MCF 10A (cell line): ENCODE measurements at regions of chr10 and their contacts with region 1.

Region 1: DNA sequence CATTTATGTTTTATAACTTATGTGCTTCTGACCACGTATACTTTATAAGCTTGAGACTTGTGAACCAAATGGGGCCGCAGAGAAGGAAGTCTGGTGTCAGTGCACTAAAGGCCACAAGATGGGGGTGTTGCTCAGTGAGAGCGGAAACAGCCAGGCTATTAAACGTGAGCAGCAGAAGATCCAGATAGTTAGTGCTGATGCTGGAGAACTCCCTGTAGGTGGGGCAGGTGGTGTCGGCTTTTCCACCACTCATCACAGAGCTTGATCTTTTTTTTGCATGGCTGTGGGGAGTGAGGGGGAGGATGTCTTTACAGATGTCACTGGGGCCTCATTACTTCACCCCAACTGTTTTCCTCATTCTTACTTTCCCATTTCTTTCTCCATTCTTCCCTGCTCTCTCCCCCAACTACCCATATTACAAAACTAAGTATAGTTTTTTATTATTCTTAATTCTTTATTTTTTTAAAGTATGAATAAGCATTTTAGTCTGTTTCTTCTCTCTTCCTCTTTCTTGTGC is 34.7 kb downstream of the ACADSB start:
- DNase-seq: peak; percentile 79
- H3K4me3 Mint-ChIP-seq: no peak overlapping the region
- H3K27ac Mint-ChIP-seq: no peak overlapping the region
- H3K4me1 Mint-ChIP-seq: no peaks in the 10 kb centered on the region
- H3K27me3 Mint-ChIP-seq: no peaks in the 10 kb centered on the region
- CTCF ChIP-seq: peak; percentile 86

Region 2: DNA sequence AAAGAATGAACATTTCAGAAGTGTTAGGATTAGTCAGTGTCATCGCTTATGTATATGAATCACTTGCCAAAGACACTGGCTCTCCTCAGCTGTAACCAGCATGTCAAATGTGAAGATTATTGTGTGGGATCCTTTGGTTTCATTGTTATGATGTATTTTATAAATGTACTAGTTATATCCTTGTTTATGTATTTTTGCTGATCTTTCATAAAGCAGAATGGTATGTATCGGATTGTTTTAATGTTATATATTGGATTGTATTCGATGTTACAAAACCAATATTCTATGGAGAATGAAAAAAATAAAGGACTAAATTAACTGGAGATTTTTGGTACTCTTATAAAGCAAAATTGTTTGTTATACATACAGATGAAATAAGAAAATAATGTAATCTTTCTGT is 14.5 kb after region 1 on chr10:
- CTCF ChIA-PET with region 1: interaction called, 12 read pairs
- POLR2A ChIA-PET with region 1: interaction called, 4 read pairs
- intact Hi-C with region 1: no loop called
- DNase-seq: no peak
- H3K4me3 Mint-ChIP-seq: no peak overlapping the region
- H3K27ac Mint-ChIP-seq: no peak overlapping the region
- H3K4me1 Mint-ChIP-seq: no peaks in the 10 kb centered on the region
- H3K27me3 Mint-ChIP-seq: no peaks in the 10 kb centered on the region
- CTCF ChIP-seq: no peak

Region 3: DNA sequence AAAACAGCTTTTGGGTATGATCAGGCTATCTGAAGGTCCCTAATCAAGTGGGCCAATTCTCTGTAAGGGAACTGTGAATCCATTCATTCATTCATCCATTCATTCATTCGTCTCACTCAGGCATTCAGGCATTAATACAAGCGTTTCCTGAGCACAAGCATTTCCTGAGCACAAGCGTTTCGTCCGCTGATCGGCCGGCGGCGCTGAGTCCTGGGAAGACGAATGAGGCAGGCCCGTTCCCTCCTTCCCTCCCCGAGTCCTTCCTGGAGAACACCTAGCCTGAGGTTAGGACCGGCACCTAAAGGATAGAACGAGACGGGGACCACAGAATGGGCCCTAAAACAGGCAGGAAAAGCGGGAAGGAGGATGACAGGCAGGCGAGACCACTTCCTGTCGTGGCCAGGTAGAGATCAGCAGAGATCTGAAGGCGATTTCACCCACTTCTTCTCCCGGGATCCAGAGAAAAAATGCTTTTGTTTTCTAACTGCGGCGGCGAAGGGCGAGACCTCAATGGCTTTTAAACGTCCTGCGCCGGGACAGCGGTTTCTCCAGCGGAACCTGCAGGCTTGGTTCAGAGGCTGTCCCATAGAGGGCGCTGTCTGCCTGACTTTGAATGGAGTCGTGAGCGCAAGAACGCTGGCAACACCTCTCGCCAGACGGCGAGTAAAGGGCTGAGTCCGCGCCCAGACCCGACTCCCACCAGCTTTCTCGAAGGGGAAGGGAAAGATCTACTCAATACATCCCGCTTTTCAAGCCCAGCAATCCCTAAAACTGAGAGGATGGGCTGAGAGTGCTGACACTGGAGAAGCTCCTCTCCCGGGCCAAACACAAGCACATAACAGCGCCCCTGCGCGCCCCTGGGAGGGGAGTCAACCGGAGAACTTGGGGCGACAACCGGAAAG is 89.4 kb after region 1 on chr10:
- CTCF ChIA-PET with region 1: interaction called, 36 read pairs
- POLR2A ChIA-PET with region 1: no interaction called
- intact Hi-C with region 1: loop called (anchors 1 kb)
- DNase-seq: peak; percentile 84
- H3K4me3 Mint-ChIP-seq: peak overlapping the region; percentile 51
- H3K27ac Mint-ChIP-seq: no peak overlapping the region
- H3K4me1 Mint-ChIP-seq: peaks cover 8% of the 10 kb centered on the region
- H3K27me3 Mint-ChIP-seq: peaks cover 24% of the 10 kb centered on the region
- CTCF ChIP-seq: peak; percentile 87

Region 4: GRCh38 chr10:123507298-123507697 is 463.8 kb after region 1 on chr10:
- CTCF ChIA-PET with region 1: interaction called, 10 read pairs
- POLR2A ChIA-PET with region 1: no interaction called
- intact Hi-C with region 1: no loop called
- DNase-seq: peak; percentile 27
- H3K4me3 Mint-ChIP-seq: no peak overlapping the region
- H3K27ac Mint-ChIP-seq: peak overlapping the region; percentile 32
- H3K4me1 Mint-ChIP-seq: peaks cover 5% of the 10 kb centered on the region
- H3K27me3 Mint-ChIP-seq: no peaks in the 10 kb centered on the region
- CTCF ChIP-seq: no peak

Region 5: DNA sequence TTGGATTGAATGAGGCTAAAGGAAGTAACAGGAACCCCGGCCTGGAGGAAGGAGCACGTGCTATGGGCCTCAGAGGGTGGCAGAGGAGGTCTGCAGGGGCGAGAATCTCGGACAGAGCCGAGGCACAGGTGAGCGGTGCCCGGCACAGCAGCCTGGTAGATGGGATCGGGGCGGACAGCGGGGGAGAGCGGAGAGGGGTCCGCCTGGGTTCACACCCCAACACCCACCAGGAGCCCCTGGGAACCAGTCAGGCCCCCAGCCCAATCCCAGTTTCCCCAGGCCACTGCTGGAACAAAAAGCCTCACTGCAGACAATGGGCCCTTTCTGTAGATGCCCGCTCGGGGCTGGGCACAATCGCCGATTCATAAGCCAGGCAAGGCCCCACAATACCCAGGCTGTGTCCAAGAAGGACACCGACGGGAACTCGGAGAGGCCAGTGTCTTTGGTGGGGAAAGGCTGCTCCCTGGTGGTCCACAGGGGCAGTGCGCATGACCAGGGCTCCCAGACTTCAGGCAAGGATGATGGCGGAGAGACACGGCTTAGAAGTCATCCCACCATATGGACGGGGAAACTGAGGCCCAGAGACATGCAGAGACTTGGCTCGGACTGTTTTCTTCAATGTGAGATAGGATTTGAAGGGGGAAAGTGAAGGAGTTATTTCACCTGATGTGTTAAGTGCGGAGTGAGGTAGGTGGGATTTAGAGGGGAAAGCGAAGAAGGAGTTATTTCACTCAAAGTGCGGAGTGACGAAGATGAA is 515.8 kb after region 1 on chr10:
- CTCF ChIA-PET with region 1: interaction called, 18 read pairs
- POLR2A ChIA-PET with region 1: no interaction called
- intact Hi-C with region 1: loop called (anchors 1 kb)
- DNase-seq: peak; percentile 71
- H3K4me3 Mint-ChIP-seq: no peak overlapping the region
- H3K27ac Mint-ChIP-seq: no peak overlapping the region
- H3K4me1 Mint-ChIP-seq: no peaks in the 10 kb centered on the region
- H3K27me3 Mint-ChIP-seq: no peaks in the 10 kb centered on the region
- CTCF ChIP-seq: peak; percentile 97